ENCODE measurements at regions of chr5 and their contacts with region 1.

Region 1: GRCh38 chr5:71703941-71704340 is 15.1 kb upstream of the CARTPT start:
- DNase-seq: no peak
- H3K4me3 ChIP-seq: no peak overlapping the region
- CTCF ChIP-seq: no peak

Region 2: DNA sequence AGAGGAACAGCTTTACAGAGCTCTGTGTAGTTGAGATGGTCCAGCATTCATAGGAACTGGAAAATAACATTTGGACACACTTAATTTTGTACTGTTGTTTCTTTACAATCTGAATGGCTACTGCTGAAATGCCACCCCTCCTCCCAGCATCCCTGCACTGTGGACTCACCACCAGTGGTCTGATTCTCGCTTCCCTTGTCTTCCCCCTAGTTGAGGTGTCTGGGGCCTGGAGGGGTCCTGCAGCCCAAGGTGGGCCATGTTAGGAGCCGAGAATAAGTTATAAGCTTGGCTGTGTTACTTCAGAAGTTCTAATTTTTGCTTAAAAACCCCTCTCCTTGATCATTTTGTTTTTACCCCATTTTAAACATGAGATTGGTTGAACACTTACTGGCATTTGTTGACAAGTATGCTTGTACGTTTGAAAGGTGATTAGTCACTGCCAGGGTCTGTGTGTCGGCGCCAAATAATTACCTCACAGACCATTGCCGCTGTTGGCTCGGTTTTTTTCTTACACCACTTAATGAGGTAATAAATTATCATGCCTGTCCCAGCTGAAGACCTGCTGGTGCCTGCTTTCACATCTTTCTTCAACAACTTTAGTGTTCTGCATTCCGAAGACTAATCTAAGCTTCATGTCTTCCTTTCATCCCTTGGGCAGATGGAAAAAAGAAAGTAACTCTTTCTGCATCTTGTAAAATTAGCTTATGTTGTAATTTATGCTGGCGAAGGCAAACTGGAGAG is 51.0 kb before region 1 on chr5:
- in situ Hi-C with region 1: loop called (anchors 5 kb)
- DNase-seq: peak; percentile 29
- H3K4me3 ChIP-seq: no peak overlapping the region
- CTCF ChIP-seq: no peak

Region 3: DNA sequence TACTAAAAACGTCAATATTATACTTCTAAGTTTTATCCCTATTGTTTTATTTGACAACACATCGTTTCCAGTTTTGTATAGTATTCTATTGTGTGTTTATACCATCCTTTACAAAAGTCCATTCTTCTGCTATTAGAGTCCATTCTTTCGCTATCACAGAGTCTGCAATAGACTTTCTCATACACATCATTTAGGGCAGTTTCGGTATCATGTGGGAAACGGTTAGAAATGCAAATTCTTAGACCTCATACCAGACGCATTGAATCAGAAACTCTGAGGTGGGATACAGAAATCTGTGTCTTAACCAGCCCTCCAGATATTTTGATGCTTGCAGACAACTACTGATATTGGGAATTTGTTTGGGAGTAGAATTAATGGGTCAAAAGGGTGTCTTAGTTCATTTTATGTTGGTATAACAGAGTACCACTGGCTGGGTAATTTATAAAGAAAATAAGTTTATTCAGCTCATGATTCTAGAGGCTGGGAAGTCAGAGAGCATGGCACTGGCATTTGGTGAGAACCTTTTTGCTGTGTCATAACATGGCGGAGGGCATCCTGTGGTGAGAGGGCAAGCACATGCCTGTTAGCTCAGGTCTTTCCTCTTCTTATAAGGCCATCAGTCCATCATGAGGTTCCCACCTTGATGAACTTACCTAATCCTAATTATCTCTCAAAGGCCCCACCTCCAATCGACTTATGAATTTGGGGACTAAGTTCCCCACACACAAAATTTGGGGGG is 36.2 kb after region 1 on chr5:
- in situ Hi-C with region 1: no loop called
- DNase-seq: no peak
- H3K4me3 ChIP-seq: no peak overlapping the region
- CTCF ChIP-seq: no peak

Region 4: DNA sequence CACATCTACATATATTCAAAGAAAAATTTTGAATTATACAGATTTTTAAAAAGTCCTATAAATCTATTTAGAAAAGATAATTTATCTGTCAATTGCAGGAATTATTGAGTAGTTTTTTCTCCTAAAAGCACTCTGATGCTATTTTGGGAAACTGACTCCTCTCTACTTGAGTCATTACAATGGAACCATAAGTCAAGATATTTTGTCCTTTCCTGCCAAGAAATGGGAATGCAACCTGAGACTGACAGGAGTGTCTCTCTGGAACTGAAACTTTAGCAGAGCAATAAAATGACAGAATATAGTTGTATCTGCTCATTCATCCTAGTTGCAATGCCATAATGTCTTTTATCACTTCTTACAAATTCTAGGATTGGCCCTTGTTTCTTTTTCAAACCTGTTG is 63.7 kb after region 1 on chr5:
- in situ Hi-C with region 1: loop called (anchors 10 kb)
- DNase-seq: no peak
- H3K4me3 ChIP-seq: no peak overlapping the region
- CTCF ChIP-seq: no peak